HepG2 (cell line): ENCODE measurements at regions of chr3 and their contacts with region 1.

Region 1: GRCh38 chr3:180912304-180913296 is at the start of gene FXR1:
- DNase-seq: peak; percentile 84
- ATAC-seq: peak; percentile 99
- H3K4me3 ChIP-seq: peak within 1 kb of the TSS; percentile 99 to 100 (median 99)
- H3K27ac ChIP-seq: peak within 1 kb of the TSS; percentile 98
- H3K4me1 ChIP-seq: peaks cover 43% of the 10 kb centered on the region
- H3K27me3 ChIP-seq: no peaks in the 10 kb centered on the region; a peak in 1 of 5 replicates
- CTCF ChIP-seq: peak; percentile 70
- EP300 ChIP-seq: peak in 1 of 2 experiments; percentile 44; a peak in 2 of 4 replicates
- POLR2A ChIP-seq: peak; percentile 79 to 92
- RAD21 ChIP-seq: peak; percentile 56; the same call in 1 of the 2 replicates
- total RNA-seq, gene FXR1: 132 and 205 TPM in 2 replicates

Region 2: DNA sequence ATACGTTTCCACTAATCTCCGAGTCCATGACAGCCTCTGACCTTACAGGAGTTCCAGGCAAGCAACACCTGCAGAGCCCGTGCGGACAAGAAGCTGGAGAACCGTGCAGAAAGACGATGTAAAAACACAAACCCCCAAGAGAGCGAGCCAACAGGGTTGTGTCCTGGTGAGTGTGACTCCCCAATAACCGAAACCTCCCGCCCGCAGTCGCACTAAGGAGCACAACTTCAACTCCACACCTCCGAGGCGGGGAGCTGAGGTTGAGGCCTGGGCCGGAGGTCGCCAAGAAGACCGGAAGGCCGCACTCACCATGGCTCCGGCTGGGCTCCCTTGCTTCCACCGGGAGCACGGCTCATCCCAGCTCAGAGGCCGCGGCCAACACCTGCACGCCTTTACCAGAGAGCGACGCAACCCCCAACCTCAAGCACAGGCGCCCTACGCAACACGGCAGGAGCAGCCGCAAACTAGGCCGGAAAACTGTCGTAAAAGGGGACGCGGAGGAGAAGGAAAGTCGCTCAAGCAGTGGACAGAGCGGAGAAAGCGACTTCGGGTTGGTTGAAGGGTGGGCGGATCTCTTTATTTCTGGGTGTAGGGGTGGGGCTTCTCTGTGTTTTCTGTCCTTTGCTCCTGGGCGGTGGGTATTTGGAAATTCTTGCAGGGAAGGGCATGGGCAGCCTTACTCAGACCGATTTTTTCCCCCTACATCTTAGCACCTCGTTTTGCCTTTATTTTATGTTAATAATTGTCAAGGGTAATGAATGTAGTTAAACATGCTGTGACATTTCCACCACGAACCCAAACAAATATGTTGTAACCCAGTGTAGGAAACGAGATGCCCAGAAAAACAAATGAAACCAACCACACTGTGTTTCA is 76.9 kb after region 1 on chr3 and contains the start of gene DNAJC19:
- CTCF ChIA-PET with region 1: no interaction called
- POLR2A ChIA-PET with region 1: interaction called, 20 read pairs
- in situ Hi-C with region 1: no loop called
- intact Hi-C with region 1: loop called (anchors 5 kb)
- DNase-seq: peak; percentile 96
- ATAC-seq: peak; percentile 99
- H3K4me3 ChIP-seq: peak within 1 kb of the TSS; percentile 87 to 97 (median 92)
- H3K27ac ChIP-seq: peak within 1 kb of the TSS; percentile 94
- H3K4me1 ChIP-seq: peaks cover 27% of the 10 kb centered on the region
- H3K27me3 ChIP-seq: peaks cover 0 to 2% of the 10 kb centered on the region in 2 experiments; a peak in 1 of 5 replicates
- CTCF ChIP-seq: peak; percentile 29; the same call in 1 of the 2 replicates
- EP300 ChIP-seq: peak in 1 of 2 experiments; percentile 34; a peak in 2 of 4 replicates
- POLR2A ChIP-seq: peak; percentile 89 to 91
- RAD21 ChIP-seq: no peak; the same call in 1 of the 2 replicates
- total RNA-seq, gene DNAJC19: 68.8 and 75.8 TPM in 2 replicates

Region 3: DNA sequence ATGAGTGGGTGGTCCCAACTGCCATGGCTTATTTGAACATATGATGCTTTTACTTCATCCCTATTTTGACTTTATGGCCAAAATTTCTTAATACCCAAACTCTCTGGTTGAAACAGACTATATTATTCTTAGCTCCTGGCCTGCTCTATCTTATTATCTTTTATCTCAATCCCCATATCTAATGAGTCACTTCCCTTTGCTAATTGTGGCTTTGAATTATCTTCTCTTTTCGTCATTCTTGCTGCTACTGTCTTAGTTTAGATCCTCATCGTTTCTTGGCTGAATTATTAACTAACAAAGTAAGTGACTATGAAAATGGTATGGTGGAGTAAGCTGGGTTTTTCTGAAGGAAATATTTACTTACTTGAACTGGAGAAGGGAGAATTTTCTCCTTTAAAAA is 105.1 kb after region 1 on chr3:
- CTCF ChIA-PET with region 1: no interaction called
- POLR2A ChIA-PET with region 1: no interaction called
- in situ Hi-C with region 1: no loop called
- intact Hi-C with region 1: no loop called
- DNase-seq: no peak
- ATAC-seq: no peak
- H3K4me3 ChIP-seq: no peak overlapping the region
- H3K27ac ChIP-seq: no peak overlapping the region
- H3K4me1 ChIP-seq: no peaks in the 10 kb centered on the region
- H3K27me3 ChIP-seq: no peaks in the 10 kb centered on the region; a peak in 1 of 5 replicates
- CTCF ChIP-seq: no peak
- EP300 ChIP-seq: no peak
- POLR2A ChIP-seq: no peak
- RAD21 ChIP-seq: no peak